ENCODE measurements at regions of chr5 and their contacts with region 1.

Region 1: GRCh38 chr5:151002250-151002649 is 18.1 kb upstream of the GPX3 start:
- DNase-seq: no peak
- H3K4me3 ChIP-seq: no peak overlapping the region
- H3K27ac ChIP-seq: no peak overlapping the region
- H3K4me1 ChIP-seq: peaks cover 52% of the 10 kb centered on the region
- H3K27me3 ChIP-seq: no peaks in the 10 kb centered on the region
- CTCF ChIP-seq: peak; percentile 74

Region 2: DNA sequence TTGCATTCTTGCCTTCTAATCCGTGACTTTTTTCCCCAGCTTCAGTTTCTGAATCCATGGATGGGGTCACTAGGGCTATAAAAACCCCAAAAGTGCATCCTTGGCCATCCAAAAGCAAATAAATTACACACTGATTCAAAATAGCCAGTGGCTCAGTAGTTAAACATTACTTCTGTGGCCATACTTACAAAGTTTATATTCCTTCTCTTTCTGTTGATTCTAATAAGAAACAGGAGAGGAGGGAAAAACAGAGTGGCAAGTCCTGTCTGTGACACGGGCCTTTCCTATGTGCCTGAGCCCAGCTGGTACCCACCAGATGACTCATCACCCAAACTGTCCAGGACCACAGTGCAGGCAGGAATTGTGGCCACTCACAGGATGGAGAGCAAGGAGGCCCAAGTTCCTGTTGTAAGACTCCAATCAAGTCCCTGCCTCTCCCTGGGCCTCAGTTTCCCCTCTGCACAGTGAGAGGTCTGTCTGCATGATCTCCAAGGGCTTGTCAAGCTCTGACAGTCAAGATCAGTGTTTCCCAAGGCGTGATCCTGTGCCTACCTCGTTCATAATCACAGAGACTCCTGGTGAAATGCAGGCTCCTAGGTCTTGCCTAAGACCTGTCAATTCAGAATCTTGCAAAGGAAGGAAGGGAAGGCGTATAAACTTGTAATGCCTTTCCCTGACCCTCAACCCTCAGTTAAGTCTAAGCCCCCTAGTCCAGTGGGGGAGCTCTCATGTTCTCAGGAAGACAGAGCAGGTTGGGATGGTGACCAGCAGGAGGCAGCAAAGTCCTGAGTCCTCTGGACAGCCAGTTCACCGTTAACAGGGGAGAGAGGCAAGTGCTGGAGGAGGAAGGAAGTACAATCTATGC is 49.0 kb after region 1 on chr5:
- intact Hi-C with region 1: loop called (anchors 5 kb)
- DNase-seq: peak; percentile 81
- H3K4me3 ChIP-seq: no peak overlapping the region
- H3K27ac ChIP-seq: peak overlapping the region; percentile 61
- H3K4me1 ChIP-seq: peaks cover 37% of the 10 kb centered on the region
- H3K27me3 ChIP-seq: no peaks in the 10 kb centered on the region
- CTCF ChIP-seq: peak; percentile 89

Region 3: GRCh38 chr5:151107738-151108508 is 105.7 kb after region 1 on chr5:
- intact Hi-C with region 1: loop called (anchors 5 kb)
- DNase-seq: peak; percentile 63
- H3K4me3 ChIP-seq: no peak overlapping the region
- H3K27ac ChIP-seq: peak overlapping the region; percentile 78
- H3K4me1 ChIP-seq: peaks cover 70% of the 10 kb centered on the region
- H3K27me3 ChIP-seq: no peaks in the 10 kb centered on the region
- CTCF ChIP-seq: peak; percentile 34

Region 4: DNA sequence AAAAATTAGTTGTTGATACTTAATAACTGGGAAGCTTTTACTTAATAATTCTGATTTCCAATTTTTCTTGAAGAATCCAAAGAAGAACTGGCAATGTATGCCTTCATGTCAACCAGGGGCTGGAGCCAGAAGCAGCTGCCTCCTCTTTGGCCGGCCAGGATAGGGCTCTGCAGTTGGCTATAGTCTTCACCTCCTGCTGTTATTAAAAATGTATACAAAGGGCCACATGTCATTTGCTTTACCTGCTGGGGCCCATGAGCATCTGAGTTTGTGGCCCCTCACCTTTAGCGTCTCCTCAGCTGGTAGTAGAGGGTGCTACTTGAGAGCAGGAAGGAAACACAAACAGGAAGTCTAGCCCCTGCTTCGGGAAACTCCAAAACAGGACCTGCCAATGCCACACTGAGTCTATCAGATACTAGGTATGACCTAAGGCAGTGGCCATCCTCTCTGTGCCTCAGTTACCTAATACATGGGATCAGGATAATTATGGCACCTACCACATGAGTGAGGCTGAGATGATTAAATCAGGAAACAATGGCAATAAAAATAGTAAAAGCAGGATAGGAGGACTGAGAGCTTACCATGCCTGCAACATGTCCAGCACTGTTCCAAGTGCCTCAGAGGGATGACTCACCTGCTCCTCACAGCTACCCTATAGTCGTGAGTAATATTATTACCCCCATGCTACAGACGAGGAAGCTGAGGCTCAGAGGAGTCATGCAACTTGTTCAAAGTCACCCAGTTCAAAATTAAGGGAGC is 200.3 kb after region 1 on chr5:
- intact Hi-C with region 1: no loop called
- DNase-seq: no peak
- H3K4me3 ChIP-seq: no peak overlapping the region
- H3K27ac ChIP-seq: peak overlapping the region; percentile 6
- H3K4me1 ChIP-seq: peaks cover 14% of the 10 kb centered on the region
- H3K27me3 ChIP-seq: no peaks in the 10 kb centered on the region
- CTCF ChIP-seq: no peak

Region 5: DNA sequence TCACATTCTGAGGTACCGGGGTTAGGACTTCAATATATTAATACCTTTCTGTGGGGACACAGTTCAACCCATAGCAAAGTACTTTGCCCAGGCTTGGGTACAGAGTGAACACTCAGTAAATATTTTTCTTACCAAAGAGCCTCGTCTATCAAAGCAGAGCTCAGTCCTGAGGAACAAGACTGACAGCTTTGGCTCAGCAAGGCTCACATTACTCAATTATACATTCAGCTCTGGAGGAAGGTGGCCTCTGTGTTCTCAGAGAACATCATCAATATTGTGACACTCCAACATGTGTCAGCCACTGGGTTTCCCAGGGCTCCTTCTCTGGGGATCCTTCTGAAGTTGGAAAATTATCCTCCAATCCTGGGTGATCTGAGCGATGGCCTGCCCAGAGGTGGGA is 1216.4 kb after region 1 on chr5:
- intact Hi-C with region 1: no loop called
- DNase-seq: no peak
- H3K4me3 ChIP-seq: no peak overlapping the region
- H3K27ac ChIP-seq: no peak overlapping the region
- H3K4me1 ChIP-seq: peaks cover 26% of the 10 kb centered on the region
- H3K27me3 ChIP-seq: no peaks in the 10 kb centered on the region
- CTCF ChIP-seq: no peak